ENCODE measurements at regions of chr1 and their contacts with region 1.

Region 1: DNA sequence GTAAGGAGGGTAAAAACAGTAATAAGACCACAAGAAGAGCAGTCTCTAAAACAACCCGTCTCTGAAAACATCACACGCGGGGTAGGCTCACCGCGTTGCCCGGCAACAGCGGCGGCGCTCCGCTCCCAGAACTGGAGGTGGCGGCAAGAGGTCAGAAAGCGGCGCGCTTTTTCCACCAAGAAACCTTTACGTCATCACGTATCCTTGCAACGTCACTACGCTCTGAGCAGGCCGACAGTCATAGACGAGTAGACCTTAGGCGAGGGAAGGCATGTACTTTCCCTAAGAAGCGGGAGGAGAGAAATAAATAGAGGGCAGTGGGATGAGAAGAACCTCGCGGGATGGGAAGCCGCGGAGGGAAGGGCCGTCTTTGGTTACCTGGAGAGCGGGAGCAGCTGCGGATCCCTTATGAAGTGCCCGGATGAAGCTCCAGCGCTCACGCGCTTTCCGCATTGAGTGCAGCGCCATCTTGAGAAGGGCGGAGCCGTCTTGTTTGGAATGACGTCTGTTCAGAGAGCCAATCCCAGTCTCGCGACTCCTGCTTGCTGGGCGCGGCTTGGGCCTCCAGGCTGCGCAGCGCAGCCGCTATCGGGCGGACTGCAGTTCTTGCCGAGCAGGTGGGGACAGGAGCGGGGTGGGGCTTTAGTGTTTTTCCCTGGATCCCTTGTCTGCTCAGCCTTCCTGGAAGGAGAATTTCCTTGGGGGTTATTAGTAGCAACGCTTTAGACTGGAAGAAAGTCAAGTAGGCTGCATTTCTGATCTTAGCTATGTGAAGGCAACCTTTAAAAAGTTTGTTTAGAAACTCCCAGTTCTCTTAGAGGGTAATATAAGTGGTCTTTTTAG is at the start of gene WARS2:
- DNase-seq: peak; percentile 97
- H3K4me3 ChIP-seq: peak within 1 kb of the TSS; percentile 14 to 71 (median 56)
- H3K27ac ChIP-seq: peak within 1 kb of the TSS; percentile 89
- H3K4me1 ChIP-seq: peaks cover 13% of the 10 kb centered on the region
- H3K27me3 ChIP-seq: no peaks in the 10 kb centered on the region
- CTCF ChIP-seq: no peak
- POLR2A ChIP-seq: peak; percentile 92
- total RNA-seq, gene WARS2: 11.8 and 13.1 TPM in 2 replicates

Region 2: DNA sequence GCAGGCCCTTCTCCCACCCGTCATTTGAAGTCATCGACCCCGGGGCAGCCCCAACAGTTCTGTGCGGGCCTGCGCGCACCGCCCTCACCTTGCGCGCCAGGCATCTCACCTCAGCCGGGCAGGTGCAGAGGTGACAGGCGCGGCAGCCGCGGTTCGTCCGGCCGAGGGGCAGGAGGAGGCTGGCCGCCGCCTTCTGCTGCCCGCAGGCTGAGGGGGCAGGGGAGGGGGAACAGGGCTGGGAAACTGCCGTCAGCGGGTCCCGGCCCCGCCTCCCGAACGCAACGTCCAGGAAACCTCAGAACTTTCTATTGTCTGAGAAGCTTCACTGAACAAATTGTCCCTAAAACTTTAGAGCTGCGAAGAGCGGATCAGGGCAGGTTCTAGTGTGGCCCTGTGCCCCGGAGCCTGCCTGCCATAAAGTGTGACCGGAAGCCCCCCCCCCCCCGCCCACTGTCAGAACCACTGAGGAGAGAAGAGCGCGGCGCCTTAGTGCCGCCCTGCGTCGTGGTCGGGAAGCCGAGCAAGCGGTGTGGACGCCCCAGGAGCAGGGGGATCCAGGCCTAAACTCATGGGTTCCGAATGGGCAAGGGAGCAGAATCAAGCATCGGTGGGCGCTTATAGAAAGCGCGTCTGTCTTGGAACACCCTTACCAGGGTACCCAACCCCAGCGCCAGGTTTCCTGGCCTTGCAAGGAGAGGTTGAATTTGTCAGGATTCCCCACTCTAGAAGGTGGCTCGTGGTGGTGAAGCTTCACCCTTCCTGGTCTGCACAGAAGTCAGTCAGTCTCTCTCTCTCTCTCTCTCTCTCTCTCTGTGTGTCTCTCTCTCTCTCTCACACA is 139.0 kb before region 1 on chr1:
- CTCF ChIA-PET with region 1: no interaction called
- POLR2A ChIA-PET with region 1: no interaction called
- dilution Hi-C with region 1: no loop called
- intact Hi-C with region 1: loop called (anchors 5 kb)
- DNase-seq: no peak
- H3K4me3 ChIP-seq: no peak overlapping the region
- H3K27ac ChIP-seq: no peak overlapping the region
- H3K4me1 ChIP-seq: peaks cover 6% of the 10 kb centered on the region
- H3K27me3 ChIP-seq: peaks cover 85 to 95% of the 10 kb centered on the region in 2 experiments
- CTCF ChIP-seq: no peak
- POLR2A ChIP-seq: no peak

Region 3: DNA sequence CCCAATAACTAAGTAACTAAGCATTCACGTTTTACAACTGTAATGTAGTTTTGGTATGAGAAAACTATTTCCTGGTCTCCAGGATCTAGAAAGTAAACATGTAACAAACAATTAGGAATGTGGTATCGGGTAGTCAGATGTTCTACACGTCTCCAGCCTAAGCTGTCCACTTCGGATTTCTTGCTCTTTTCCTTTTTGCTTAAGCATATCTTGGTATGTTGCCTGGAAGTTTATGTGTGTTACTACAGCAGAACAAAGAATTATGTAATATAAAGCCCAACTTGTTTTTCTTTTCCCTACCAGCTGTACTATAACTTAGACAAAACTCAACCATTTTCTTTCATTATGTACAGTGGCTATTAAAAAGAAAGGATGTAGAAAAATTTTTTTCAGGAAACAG is 20.5 kb after region 1 on chr1:
- CTCF ChIA-PET with region 1: no interaction called
- POLR2A ChIA-PET with region 1: no interaction called
- dilution Hi-C with region 1: no loop called
- intact Hi-C with region 1: loop called (anchors 2 kb)
- DNase-seq: peak; percentile 77
- H3K4me3 ChIP-seq: peak overlapping the region in 1 of 3 experiments; percentile 23
- H3K27ac ChIP-seq: peak overlapping the region; percentile 29
- H3K4me1 ChIP-seq: peaks cover 2% of the 10 kb centered on the region
- H3K27me3 ChIP-seq: no peaks in the 10 kb centered on the region
- CTCF ChIP-seq: no peak
- POLR2A ChIP-seq: no peak

Region 4: DNA sequence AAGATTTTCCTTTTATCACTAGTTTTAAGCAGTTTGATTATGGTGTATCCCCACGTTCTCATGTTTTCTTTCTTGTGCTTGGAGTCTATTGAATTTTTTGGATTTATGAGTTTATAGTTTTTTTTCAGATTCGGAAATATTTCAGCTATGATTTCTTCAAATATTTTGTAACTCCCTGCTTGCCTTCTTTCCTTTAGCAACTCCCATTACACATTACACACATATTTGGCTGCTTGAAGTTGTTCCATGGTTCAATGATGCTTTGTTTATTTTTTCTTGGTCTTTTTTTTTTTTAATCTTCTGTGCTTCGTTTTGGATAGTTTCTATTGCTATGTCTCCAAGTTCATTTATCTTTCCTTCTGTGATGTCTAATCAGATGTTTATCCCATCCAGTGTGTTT is 48.5 kb after region 1 on chr1:
- CTCF ChIA-PET with region 1: no interaction called
- POLR2A ChIA-PET with region 1: no interaction called
- dilution Hi-C with region 1: no loop called
- intact Hi-C with region 1: loop called (anchors 1 kb)
- DNase-seq: no peak
- H3K4me3 ChIP-seq: no peak overlapping the region
- H3K27ac ChIP-seq: no peak overlapping the region
- H3K4me1 ChIP-seq: peaks cover 9% of the 10 kb centered on the region
- H3K27me3 ChIP-seq: no peaks in the 10 kb centered on the region
- CTCF ChIP-seq: no peak
- POLR2A ChIP-seq: no peak

Region 5: DNA sequence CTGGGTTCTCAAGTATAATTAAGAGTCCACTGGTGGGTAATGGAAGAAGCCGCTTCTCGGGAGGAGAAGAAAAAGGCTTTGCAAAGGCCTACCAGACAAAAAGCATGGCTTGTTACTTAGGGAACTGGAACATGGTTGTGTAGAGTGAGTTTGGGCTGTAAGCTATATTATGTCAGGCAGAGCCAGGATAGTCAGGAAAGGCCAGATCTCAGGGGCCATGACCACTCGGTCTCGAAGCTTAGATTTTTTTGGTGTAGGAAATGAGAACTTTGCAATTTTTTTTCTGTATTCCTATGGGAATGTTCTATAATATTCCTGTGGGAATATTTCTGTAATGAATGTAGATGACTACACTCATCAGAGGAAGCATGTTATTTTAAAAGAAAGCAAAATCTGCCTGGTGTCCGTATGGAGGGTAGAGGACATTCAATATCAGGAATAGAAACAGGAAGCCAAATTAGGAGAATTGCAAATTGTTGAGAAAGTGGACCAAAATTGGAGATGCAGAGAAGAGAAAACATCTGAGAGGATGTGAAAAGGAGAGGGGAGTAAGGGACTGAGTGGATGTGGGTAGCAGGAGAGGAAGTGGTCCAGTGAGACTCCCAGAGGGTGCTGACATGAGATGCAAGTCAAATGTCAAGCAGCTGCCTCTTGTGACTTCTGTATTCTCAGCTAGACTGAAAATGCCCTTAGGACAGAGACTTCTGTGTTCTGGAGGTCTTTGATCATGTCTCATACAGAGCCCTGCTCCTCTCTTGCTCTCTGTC is 183.0 kb after region 1 on chr1:
- CTCF ChIA-PET with region 1: no interaction called
- POLR2A ChIA-PET with region 1: no interaction called
- dilution Hi-C with region 1: no loop called
- intact Hi-C with region 1: no loop called
- DNase-seq: no peak
- H3K4me3 ChIP-seq: no peak overlapping the region
- H3K27ac ChIP-seq: no peak overlapping the region
- H3K4me1 ChIP-seq: peaks cover 2% of the 10 kb centered on the region
- H3K27me3 ChIP-seq: peaks cover 2 to 5% of the 10 kb centered on the region in 2 experiments
- CTCF ChIP-seq: no peak
- POLR2A ChIP-seq: no peak